ENCODE measurements at regions of chr18 and their contacts with region 1.

Region 1: DNA sequence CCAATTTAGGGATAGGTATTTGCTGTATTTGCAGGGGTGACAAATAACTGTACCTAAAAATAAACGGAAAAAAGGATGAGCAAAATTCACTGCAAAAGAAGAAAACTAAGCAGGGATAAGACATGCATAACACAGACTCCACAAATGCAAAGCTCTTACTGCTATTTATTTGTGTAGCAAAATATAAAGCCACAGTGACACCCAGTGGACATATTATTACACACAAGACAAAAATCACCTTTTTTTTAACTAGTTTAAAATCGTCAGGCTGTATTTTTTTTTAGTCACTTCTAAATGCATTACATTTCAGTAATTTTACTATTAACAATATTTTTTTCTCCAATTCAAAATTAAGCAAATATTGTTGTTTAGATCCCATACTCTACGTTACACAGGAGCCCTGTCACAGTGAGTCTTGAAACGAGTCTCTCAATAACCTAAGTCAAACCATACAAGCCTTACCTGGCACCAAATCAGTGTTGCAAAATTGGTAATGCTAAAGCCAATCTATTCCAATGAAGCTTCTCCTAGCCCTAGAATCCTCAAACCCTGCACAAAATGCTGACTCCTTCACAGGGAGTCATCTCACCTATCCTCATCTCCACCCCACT is 23.7 kb downstream of the METTL4 start:
- DNase-seq: no peak
- H3K4me3 ChIP-seq: no peak overlapping the region
- H3K27ac ChIP-seq: no peak overlapping the region
- H3K4me1 ChIP-seq: no peaks in the 10 kb centered on the region
- H3K27me3 ChIP-seq: no peaks in the 10 kb centered on the region
- CTCF ChIP-seq: peak; percentile 39 to 70 (median 46)
- POLR2A ChIP-seq: no peak

Region 2: GRCh38 chr18:1585879-1586488 is 961.6 kb before region 1 on chr18:
- intact Hi-C with region 1: loop called (anchors 10 kb)
- DNase-seq: peak in 1 of 7 donors; percentile 3
- H3K4me3 ChIP-seq: no peak overlapping the region
- H3K27ac ChIP-seq: no peak overlapping the region
- H3K4me1 ChIP-seq: no peaks in the 10 kb centered on the region
- H3K27me3 ChIP-seq: peaks cover 3% of the 10 kb centered on the region
- CTCF ChIP-seq: peak in 5 of 6 experiments; percentile 32 to 59 (median 40)
- POLR2A ChIP-seq: no peak

Region 3: GRCh38 chr18:2104620-2105462 is 442.7 kb before region 1 on chr18:
- intact Hi-C with region 1: loop called in 1 of 2 experiments (anchors 10 kb)
- DNase-seq: peak; percentile 23 to 64 (median 59)
- H3K4me3 ChIP-seq: no peak overlapping the region
- H3K27ac ChIP-seq: no peak overlapping the region
- H3K4me1 ChIP-seq: no peaks in the 10 kb centered on the region
- H3K27me3 ChIP-seq: no peaks in the 10 kb centered on the region
- CTCF ChIP-seq: peak; percentile 38 to 66 (median 56)
- POLR2A ChIP-seq: no peak

Region 4: DNA sequence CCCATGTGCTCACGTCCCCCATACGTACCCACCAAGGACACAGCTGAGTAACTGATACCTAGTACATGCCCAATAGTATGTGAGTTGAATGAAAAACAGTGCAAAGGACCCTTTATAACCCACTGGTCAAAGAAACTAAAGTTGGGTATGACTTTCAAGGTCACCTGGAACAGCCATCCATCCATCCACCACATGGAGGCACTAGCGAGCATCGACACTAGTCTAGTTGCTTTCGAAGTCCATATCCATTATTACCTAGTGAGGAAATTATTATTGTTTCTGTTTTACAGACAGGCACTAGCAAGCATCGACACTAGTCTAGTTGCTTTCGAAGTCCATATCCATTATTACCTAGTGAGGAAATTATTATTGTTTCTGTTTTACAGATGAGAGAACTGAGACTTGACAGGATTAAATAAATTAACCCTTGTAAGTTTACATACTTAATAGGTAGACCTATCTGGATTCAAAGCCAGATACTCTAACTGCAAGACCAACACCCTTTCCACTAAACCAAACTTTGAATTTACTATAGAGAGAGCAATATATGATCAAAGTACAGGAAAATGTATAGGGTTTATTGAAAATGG is 209.9 kb before region 1 on chr18:
- intact Hi-C with region 1: loop called in 1 of 2 experiments (anchors 10 kb)
- DNase-seq: peak in 4 of 7 donors; percentile 10 to 55 (median 36)
- H3K4me3 ChIP-seq: no peak overlapping the region
- H3K27ac ChIP-seq: no peak overlapping the region
- H3K4me1 ChIP-seq: no peaks in the 10 kb centered on the region
- H3K27me3 ChIP-seq: no peaks in the 10 kb centered on the region
- CTCF ChIP-seq: peak; percentile 5 to 47 (median 38)
- POLR2A ChIP-seq: no peak

Region 5: GRCh38 chr18:2480575-2480974 is 67.0 kb before region 1 on chr18:
- intact Hi-C with region 1: no loop called
- DNase-seq: no peak
- H3K4me3 ChIP-seq: no peak overlapping the region
- H3K27ac ChIP-seq: no peak overlapping the region
- H3K4me1 ChIP-seq: no peaks in the 10 kb centered on the region
- H3K27me3 ChIP-seq: no peaks in the 10 kb centered on the region
- CTCF ChIP-seq: no peak
- POLR2A ChIP-seq: no peak